ENCODE measurements at regions of chr1 and their contacts with region 1.

Region 1: GRCh38 chr1:40862008-40862863 is at the start of gene CITED4:
- DNase-seq: peak; percentile 98
- ATAC-seq: peak; percentile 90
- H3K4me3 Mint-ChIP-seq: peak within 1 kb of the TSS; percentile 85
- H3K27ac Mint-ChIP-seq: peak within 1 kb of the TSS; percentile 97
- H3K4me1 Mint-ChIP-seq: peaks cover 19% of the 10 kb centered on the region
- H3K27me3 Mint-ChIP-seq: peaks cover 29% of the 10 kb centered on the region
- total RNA-seq, gene CITED4: 13.1 to 15.0 TPM

Region 2: GRCh38 chr1:40820251-40820797 is 41.9 kb before region 1 on chr1:
- POLR2A ChIA-PET with region 1: no interaction called
- DNase-seq: no peak
- ATAC-seq: no peak
- H3K4me3 Mint-ChIP-seq: no peak overlapping the region
- H3K27ac Mint-ChIP-seq: peak overlapping the region; percentile 5
- H3K4me1 Mint-ChIP-seq: peaks cover 14% of the 10 kb centered on the region
- H3K27me3 Mint-ChIP-seq: no peaks in the 10 kb centered on the region

Region 3: GRCh38 chr1:40877698-40878097 is 15.5 kb after region 1 on chr1:
- POLR2A ChIA-PET with region 1: interaction called, 43 read pairs
- DNase-seq: no peak
- ATAC-seq: no peak
- H3K4me3 Mint-ChIP-seq: no peak overlapping the region
- H3K27ac Mint-ChIP-seq: peak overlapping the region; percentile 30
- H3K4me1 Mint-ChIP-seq: peaks cover 35% of the 10 kb centered on the region
- H3K27me3 Mint-ChIP-seq: peaks cover 19% of the 10 kb centered on the region

Region 4: GRCh38 chr1:40951943-40952743 is 89.9 kb after region 1 on chr1:
- POLR2A ChIA-PET with region 1: interaction called, 40 read pairs
- DNase-seq: peak; percentile 77
- ATAC-seq: peak; percentile 57
- H3K4me3 Mint-ChIP-seq: no peak overlapping the region
- H3K27ac Mint-ChIP-seq: peak overlapping the region; percentile 19
- H3K4me1 Mint-ChIP-seq: peaks cover 23% of the 10 kb centered on the region
- H3K27me3 Mint-ChIP-seq: peaks cover 29% of the 10 kb centered on the region

Region 5: GRCh38 chr1:40979233-40980067 is 117.2 kb after region 1 on chr1 and contains the start of gene CTPS1:
- POLR2A ChIA-PET with region 1: interaction called, 28 read pairs
- DNase-seq: peak; percentile 98
- ATAC-seq: peak; percentile 92
- H3K4me3 Mint-ChIP-seq: peak within 1 kb of the TSS; percentile 93
- H3K27ac Mint-ChIP-seq: peak within 1 kb of the TSS; percentile 96
- H3K4me1 Mint-ChIP-seq: peaks cover 37% of the 10 kb centered on the region
- H3K27me3 Mint-ChIP-seq: no peaks in the 10 kb centered on the region
- total RNA-seq, gene CTPS1: 45.1 to 47.5 TPM